ENCODE measurements at regions of chr20 and their contacts with region 1.

Region 1: GRCh38 chr20:44193801-44194200 is 6.8 kb upstream of the JPH2 start:
- DNase-seq: no peak
- ATAC-seq: no peak
- H3K4me3 ChIP-seq: no peak overlapping the region
- H3K27ac ChIP-seq: no peak overlapping the region
- H3K4me1 ChIP-seq: no peaks in the 10 kb centered on the region
- H3K27me3 ChIP-seq: no peaks in the 10 kb centered on the region
- CTCF ChIP-seq: no peak
- POLR2A ChIP-seq: no peak

Region 2: DNA sequence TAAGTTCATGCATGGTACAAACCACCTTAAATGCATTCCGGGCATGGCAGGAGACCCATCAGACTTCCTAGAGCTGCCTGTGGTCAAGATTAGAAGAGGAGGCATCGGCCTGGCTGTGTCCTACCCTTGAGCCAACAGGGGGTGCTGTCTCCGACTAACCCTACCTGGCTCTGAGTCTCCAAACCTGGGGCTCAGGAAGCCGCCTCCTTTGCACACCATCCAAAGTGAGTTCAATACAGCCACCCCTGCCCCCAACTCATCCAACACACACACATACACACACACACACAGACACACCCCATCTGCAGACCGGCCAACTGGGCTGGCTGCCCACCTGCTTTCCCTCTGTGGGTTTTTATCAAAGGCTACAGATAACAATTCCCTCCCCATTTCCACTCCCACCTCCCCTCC is 83.8 kb before region 1 on chr20:
- intact Hi-C with region 1: loop called (anchors 5 kb)
- DNase-seq: no peak
- ATAC-seq: no peak
- H3K4me3 ChIP-seq: no peak overlapping the region
- H3K27ac ChIP-seq: no peak overlapping the region
- H3K4me1 ChIP-seq: no peaks in the 10 kb centered on the region
- H3K27me3 ChIP-seq: no peaks in the 10 kb centered on the region
- CTCF ChIP-seq: peak in 1 of 4 donors; percentile 5
- POLR2A ChIP-seq: no peak

Region 3: GRCh38 chr20:44247586-44248409 is 54.0 kb after region 1 on chr20:
- intact Hi-C with region 1: no loop called
- DNase-seq: no peak
- ATAC-seq: peak; percentile 33 to 44 (median 37)
- H3K4me3 ChIP-seq: no peak overlapping the region
- H3K27ac ChIP-seq: no peak overlapping the region
- H3K4me1 ChIP-seq: no peaks in the 10 kb centered on the region
- H3K27me3 ChIP-seq: no peaks in the 10 kb centered on the region
- CTCF ChIP-seq: peak in 2 of 4 donors; percentile 4 to 9
- POLR2A ChIP-seq: no peak

Measured in right lobe of liver (tissue), 6 donors.